PC-3 (cell line): ENCODE measurements at regions of chr7 and their contacts with region 1.

Region 1: GRCh38 chr7:81956520-81956919 is 186.7 kb upstream of the HGF start:
- DNase-seq: peak; percentile 68
- ATAC-seq: peak; percentile 74
- H3K4me3 ChIP-seq: no peak overlapping the region
- H3K27ac ChIP-seq: no peak overlapping the region
- H3K4me1 ChIP-seq: no peaks in the 10 kb centered on the region
- H3K27me3 ChIP-seq: peaks cover 3% of the 10 kb centered on the region; the same call in 1 of the 2 replicates
- CTCF ChIP-seq: peak; percentile 81

Region 2: DNA sequence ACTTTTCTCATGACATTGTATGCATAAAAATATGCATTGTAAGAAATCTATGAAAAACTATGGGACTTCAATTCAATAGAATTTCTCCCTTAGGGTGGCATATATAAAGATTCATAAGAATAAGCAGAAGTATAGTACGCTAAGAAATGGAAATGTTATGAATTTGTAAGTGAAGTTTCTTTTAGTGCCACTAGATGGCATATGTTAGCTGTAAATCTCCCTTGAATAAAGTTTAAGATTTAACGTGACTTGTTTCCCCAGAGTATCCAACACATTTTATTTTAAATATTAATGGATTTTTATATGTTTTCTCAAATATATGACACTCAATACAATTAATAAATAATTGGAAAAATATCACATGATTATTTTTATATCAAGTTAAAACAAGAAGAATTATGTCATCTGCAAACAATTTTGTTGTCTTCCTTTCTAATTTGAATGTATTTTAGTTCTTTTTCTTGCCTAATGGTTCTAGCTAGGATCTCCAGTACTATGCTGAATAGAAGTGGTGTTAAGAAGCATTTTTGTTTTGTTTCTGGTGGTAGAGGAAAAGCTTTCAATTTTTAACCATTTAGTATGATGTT is 473.8 kb before region 1 on chr7:
- CTCF ChIA-PET with region 1: no interaction called
- POLR2A ChIA-PET with region 1: no interaction called
- intact Hi-C with region 1: loop called (anchors 1 kb)
- DNase-seq: peak; percentile 55
- ATAC-seq: peak; percentile 49; the same call in 1 of the 2 replicates
- H3K4me3 ChIP-seq: no peak overlapping the region
- H3K27ac ChIP-seq: no peak overlapping the region
- H3K4me1 ChIP-seq: 0 out of 2 replicates have a peak, but pooled peaks cover 4% of the 10 kb centered on the region
- H3K27me3 ChIP-seq: no peaks in the 10 kb centered on the region
- CTCF ChIP-seq: peak; percentile 70

Region 3: DNA sequence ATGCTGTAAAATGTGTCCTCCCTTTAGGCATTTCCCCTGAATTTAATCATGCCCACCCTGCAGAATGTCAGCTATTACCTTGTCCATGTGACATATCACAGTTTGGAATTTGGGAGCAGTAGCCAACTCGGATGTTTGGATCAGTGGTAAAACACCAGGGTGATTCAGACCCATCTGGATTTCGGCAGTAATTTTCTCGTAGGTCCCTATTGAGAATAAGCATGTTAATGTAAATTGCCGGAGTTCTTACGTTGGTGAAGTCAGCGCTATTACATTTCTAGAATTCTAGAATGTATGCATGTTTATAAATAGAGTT is 230.8 kb before region 1 on chr7:
- CTCF ChIA-PET with region 1: no interaction called
- POLR2A ChIA-PET with region 1: no interaction called
- intact Hi-C with region 1: no loop called
- DNase-seq: peak; percentile 93
- ATAC-seq: peak; percentile 92
- H3K4me3 ChIP-seq: peak overlapping the region; percentile 22; the same call in 1 of the 2 replicates
- H3K27ac ChIP-seq: peak overlapping the region; percentile 51
- H3K4me1 ChIP-seq: peaks cover 29% of the 10 kb centered on the region
- H3K27me3 ChIP-seq: no peaks in the 10 kb centered on the region
- CTCF ChIP-seq: no peak

Region 4: GRCh38 chr7:81769891-81770727 is 186.4 kb before region 1 on chr7 and contains the start of gene HGF:
- CTCF ChIA-PET with region 1: no interaction called
- POLR2A ChIA-PET with region 1: no interaction called
- intact Hi-C with region 1: loop called (anchors 5 kb)
- DNase-seq: peak; percentile 58
- ATAC-seq: peak; percentile 96
- H3K4me3 ChIP-seq: peak within 1 kb of the TSS; percentile 38; the same call in 1 of the 2 replicates
- H3K27ac ChIP-seq: no peak within 1 kb of the TSS
- H3K4me1 ChIP-seq: no peaks in the 10 kb centered on the region; the same call in 1 of the 2 replicates
- H3K27me3 ChIP-seq: no peaks in the 10 kb centered on the region
- CTCF ChIP-seq: no peak; the same call in 1 of the 2 replicates
- total RNA-seq, gene HGF: 0.15 TPM in 1 of 2 replicates, not detected in the other